ENCODE measurements at regions of chr11 and their contacts with region 1.

Region 1: DNA sequence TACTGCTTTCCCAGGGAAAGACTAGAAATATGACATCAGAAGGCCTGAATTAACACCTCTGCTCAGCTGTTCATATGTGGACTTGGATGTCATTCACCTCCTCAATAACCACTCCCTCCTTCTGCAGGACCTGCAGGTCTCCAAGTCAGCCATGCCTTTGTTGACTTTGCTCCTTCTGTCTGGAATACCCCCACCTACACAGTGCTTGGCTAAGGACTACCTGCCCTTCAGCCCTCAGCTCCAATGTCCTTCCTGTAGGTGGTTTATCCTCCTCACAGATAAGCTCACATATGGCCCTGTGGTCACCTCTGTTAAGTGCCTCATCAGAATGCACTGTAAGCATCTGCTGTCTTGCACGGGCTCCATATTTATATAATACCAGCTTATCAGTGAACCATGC is 26.4 kb upstream of the FAT3 start:
- DNase-seq: no peak
- ATAC-seq: no peak
- H3K4me3 ChIP-seq: no peak overlapping the region
- H3K27ac ChIP-seq: no peak overlapping the region
- H3K4me1 ChIP-seq: no peaks in the 10 kb centered on the region
- H3K27me3 ChIP-seq: no peaks in the 10 kb centered on the region
- CTCF ChIP-seq: no peak
- EP300 ChIP-seq: no peak
- POLR2A ChIP-seq: no peak
- RAD21 ChIP-seq: no peak

Region 2: GRCh38 chr11:91066456-91067047 is 1131.7 kb before region 1 on chr11:
- CTCF ChIA-PET with region 1: no interaction called
- POLR2A ChIA-PET with region 1: no interaction called
- in situ Hi-C with region 1: no loop called
- intact Hi-C with region 1: loop called (anchors 5 kb)
- DNase-seq: no peak
- ATAC-seq: no peak
- H3K4me3 ChIP-seq: no peak overlapping the region
- H3K27ac ChIP-seq: no peak overlapping the region
- H3K4me1 ChIP-seq: no peaks in the 10 kb centered on the region
- H3K27me3 ChIP-seq: no peaks in the 10 kb centered on the region
- CTCF ChIP-seq: no peak
- EP300 ChIP-seq: no peak
- POLR2A ChIP-seq: no peak
- RAD21 ChIP-seq: no peak

Region 3: GRCh38 chr11:92083123-92083522 is 115.1 kb before region 1 on chr11:
- CTCF ChIA-PET with region 1: no interaction called
- POLR2A ChIA-PET with region 1: no interaction called
- in situ Hi-C with region 1: no loop called
- intact Hi-C with region 1: no loop called
- DNase-seq: no peak
- ATAC-seq: no peak
- H3K4me3 ChIP-seq: no peak overlapping the region
- H3K27ac ChIP-seq: no peak overlapping the region
- H3K4me1 ChIP-seq: no peaks in the 10 kb centered on the region
- H3K27me3 ChIP-seq: no peaks in the 10 kb centered on the region; a peak in 1 of 5 replicates
- CTCF ChIP-seq: no peak
- EP300 ChIP-seq: no peak
- POLR2A ChIP-seq: no peak
- RAD21 ChIP-seq: no peak

Region 4: DNA sequence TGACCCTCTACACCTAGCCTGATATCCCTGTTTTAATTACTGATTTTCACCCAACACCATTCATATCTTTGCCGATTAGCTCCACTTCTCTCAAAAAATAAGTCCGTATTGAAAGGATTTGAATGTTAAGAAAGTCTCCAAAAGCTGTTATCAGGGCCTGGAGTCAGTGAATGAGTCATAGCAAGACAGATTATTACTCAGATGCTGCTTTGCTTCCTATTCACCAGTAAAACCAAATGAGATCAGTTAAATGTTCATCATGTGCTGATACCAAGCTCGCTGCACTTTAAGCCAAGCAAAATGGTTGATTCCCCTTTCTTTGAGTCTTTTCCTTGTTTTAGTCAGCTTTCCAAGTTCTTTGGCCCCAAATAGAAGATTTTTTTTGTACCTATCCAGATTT is 254.8 kb after region 1 on chr11:
- CTCF ChIA-PET with region 1: no interaction called
- POLR2A ChIA-PET with region 1: no interaction called
- in situ Hi-C with region 1: no loop called
- intact Hi-C with region 1: no loop called
- DNase-seq: no peak
- ATAC-seq: no peak
- H3K4me3 ChIP-seq: no peak overlapping the region
- H3K27ac ChIP-seq: no peak overlapping the region
- H3K4me1 ChIP-seq: no peaks in the 10 kb centered on the region
- H3K27me3 ChIP-seq: no peaks in the 10 kb centered on the region
- CTCF ChIP-seq: no peak
- EP300 ChIP-seq: no peak
- POLR2A ChIP-seq: no peak
- RAD21 ChIP-seq: no peak